ENCODE measurements at regions of chr5 and their contacts with region 1.

Region 1: GRCh38 chr5:151020304-151021110 is at the start of gene GPX3:
- DNase-seq: peak; percentile 97 to 98
- ATAC-seq: peak; percentile 57 to 61
- H3K4me3 ChIP-seq: peak within 1 kb of the TSS; percentile 84 to 97 (median 94)
- H3K27ac ChIP-seq: peak within 1 kb of the TSS; percentile 94 to 99 (median 96)
- H3K4me1 ChIP-seq: peaks cover 46 to 48% of the 10 kb centered on the region in 2 donors
- H3K27me3 ChIP-seq: no peaks in the 10 kb centered on the region
- CTCF ChIP-seq: peak in 1 of 5 experiments; percentile 7
- POLR2A ChIP-seq: peak; percentile 96 to 99
- total RNA-seq, gene GPX3: 504 to 1,227 (median 655) TPM

Region 2: GRCh38 chr5:151037561-151038411 is 17.3 kb after region 1 on chr5:
- in situ Hi-C with region 1: no loop called
- intact Hi-C with region 1: loop called (anchors 2 kb)
- DNase-seq: peak; percentile 81 to 84
- ATAC-seq: peak; percentile 41 to 54
- H3K4me3 ChIP-seq: no peak overlapping the region
- H3K27ac ChIP-seq: peak overlapping the region; percentile 88 to 98 (median 95)
- H3K4me1 ChIP-seq: peaks cover 48 to 54% of the 10 kb centered on the region in 2 donors
- H3K27me3 ChIP-seq: no peaks in the 10 kb centered on the region
- CTCF ChIP-seq: no peak
- POLR2A ChIP-seq: peak in 1 of 2 donors; percentile 41